ENCODE measurements at regions of chr2 and their contacts with region 1.

Region 1: DNA sequence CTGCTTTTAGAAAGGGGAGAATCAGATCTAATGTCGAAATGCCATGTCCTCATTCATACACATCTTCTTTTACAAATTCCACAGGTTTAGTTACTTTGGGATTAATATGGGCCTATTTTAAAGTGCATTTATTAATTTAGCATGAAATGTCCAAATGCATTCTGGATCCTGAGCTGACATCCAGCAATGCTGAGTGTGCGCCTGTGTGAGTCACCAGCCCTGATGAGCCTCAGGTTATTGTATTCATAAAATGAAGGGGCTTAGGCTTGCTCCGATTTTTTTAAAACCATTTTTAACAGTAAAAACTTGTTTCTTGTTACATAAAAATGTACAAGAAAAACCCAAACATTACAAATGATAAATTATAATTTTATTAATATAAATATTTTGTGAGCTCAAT is 94.1 kb downstream of the SH3YL1 start:
- DNase-seq: no peak

Region 2: GRCh38 chr2:636641-637405 is 467.1 kb after region 1 on chr2:
- intact Hi-C with region 1: loop called (anchors 5 kb)
- DNase-seq: no peak

Measured in cardiac septum (tissue), 1 donor.